H1 (cell line): ENCODE measurements at regions of chr21 and their contacts with region 1.

Region 1: GRCh38 chr21:26814374-26814773 is 30.8 kb downstream of the ADAMTS1 start:
- DNase-seq: no peak
- H3K4me3 ChIP-seq: no peak overlapping the region
- H3K27ac ChIP-seq: no peak overlapping the region
- H3K4me1 ChIP-seq: no peaks in the 10 kb centered on the region
- H3K27me3 ChIP-seq: no peaks in the 10 kb centered on the region
- CTCF ChIP-seq: no peak
- EP300 ChIP-seq: no peak
- POLR2A ChIP-seq: no peak
- RAD21 ChIP-seq: no peak

Region 2: GRCh38 chr21:26826801-26827200 is 12.4 kb after region 1 on chr21:
- CTCF ChIA-PET with region 1: interaction called, 20 read pairs
- POLR2A ChIA-PET with region 1: no interaction called
- DNase-seq: no peak
- H3K4me3 ChIP-seq: no peak overlapping the region
- H3K27ac ChIP-seq: no peak overlapping the region
- H3K4me1 ChIP-seq: no peaks in the 10 kb centered on the region
- H3K27me3 ChIP-seq: no peaks in the 10 kb centered on the region
- CTCF ChIP-seq: no peak
- EP300 ChIP-seq: no peak
- POLR2A ChIP-seq: no peak
- RAD21 ChIP-seq: no peak

Region 3: DNA sequence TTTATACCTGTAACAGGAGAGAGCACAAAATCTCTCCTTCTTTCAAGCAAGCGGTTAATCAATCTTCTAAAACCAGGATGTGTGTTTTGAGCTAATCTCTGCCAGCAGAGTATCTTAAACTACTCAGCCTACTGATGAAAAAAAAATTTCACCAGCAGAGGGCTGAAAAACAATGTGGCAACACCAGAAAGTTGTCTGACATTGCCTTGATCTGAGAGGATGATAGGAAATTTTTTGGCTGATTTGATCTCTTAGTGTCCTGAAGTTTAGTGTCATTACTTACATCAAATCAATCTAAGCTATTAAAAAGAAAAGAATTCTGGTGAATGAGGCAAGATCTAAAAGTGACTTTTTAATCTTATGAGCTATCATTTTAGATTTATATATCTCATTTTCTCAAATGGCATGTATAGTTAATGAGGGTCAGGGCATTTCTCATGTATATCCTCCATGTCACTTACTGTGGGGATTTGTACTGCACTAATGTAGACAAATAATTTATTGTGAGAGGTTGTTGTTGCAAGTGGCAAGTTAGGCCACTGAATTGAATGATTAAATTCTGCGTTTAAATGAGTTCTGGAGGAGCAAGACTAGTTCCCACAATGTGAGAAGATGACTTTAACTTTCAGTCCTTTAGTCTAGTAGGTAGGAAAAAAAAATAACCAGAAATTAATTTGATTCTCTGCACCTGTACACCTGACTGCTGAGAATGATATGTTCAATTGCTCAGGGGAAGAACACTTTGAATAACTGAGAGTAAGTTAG is 20.0 kb after region 1 on chr21:
- CTCF ChIA-PET with region 1: interaction called, 20 read pairs
- POLR2A ChIA-PET with region 1: no interaction called
- DNase-seq: no peak
- H3K4me3 ChIP-seq: no peak overlapping the region
- H3K27ac ChIP-seq: no peak overlapping the region
- H3K4me1 ChIP-seq: no peaks in the 10 kb centered on the region
- H3K27me3 ChIP-seq: no peaks in the 10 kb centered on the region
- CTCF ChIP-seq: peak in 1 of 3 experiments; percentile 26; a peak in 1 of 4 replicates
- EP300 ChIP-seq: no peak
- POLR2A ChIP-seq: no peak
- RAD21 ChIP-seq: 0 out of 4 replicates have a peak, but pooled peaks of 1 of the 2 experiments have one; percentile 4